Posterior vena cava (tissue), 2 donors: ENCODE measurements at regions of chr10 and their contacts with region 1.

Region 1: DNA sequence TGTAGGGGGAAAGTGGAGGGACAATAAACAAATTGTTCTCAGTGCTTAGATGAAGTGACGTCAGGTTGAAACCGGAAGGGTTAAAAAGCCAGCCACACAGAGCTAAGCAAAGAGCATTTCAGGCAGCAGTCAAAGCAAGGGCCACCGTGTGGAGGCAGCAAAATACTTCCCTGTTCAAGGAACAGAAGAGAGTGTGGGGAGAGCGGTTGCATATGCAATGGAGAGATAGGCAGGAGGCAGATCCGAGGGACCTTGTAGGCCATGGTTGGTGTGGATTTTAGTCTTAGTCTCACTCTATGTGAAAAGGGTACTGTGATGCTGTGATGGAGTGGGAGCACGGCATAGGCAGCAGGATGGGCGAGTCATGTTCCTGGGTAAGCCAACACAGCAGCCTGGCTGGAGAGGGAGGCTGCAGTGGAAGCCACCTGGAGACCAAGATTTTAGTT is 3.8 kb upstream of the STN1 start:
- DNase-seq: no peak

Region 2: DNA sequence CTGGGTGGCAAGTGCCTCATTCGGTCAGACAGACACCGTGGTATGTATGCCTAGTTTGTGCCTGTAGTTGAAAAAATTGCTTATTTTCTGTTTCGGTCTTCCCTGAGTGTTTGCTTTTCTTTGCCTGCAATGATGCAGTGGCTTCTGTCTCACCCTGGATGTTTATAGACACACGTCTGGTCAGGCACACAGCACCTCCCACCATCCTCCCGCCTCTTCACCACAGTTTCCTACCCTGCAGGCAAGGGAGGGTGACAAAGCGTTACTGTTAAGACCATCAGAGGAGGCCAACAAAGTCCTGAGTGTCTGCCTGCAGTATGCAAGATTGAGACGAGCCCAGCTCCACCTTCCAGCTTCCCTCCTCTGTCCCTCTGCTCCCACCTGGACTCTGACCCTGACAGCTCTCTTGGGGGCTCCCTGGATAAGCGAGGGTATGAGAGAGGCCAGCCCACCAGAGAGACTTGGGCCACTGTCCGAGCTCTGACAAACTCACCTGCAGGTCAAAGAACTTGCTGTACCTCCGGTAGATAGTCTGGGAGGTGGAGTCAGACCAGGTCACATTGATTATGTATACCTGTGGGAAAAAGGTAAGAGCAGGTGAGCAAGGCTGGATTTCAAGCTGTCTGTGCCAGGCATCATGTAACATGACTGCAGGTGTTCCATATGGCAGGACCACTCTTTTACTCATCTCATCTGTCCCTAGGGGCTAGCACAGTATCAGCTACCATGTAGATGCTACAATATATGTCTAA is 120.8 kb before region 1 on chr10:
- intact Hi-C with region 1: no loop called
- DNase-seq: no peak

Region 3: DNA sequence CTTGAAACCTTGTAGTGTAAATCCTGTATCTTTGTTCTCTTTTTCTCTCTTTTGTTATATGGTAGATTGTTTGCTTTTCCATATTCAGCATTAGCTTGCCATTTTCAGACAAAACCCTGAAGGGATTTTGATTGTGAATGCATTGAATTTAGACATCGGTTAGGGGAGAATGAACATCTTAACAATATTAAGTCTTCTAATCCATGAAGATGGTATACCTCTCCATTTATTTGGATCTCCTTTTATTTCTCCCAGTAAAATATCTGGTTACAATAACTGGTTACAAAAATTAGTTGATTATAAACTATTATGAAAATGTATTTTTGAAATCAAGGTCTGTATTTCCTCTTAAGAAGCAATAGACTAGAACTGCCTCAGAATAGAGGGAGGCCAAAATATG is 32.8 kb after region 1 on chr10:
- intact Hi-C with region 1: no loop called
- DNase-seq: no peak

Region 4: GRCh38 chr10:103966671-103967447 is 45.1 kb after region 1 on chr10 and contains the start of gene SLK:
- intact Hi-C with region 1: loop called in 1 of 2 experiments (anchors 5 kb)
- DNase-seq: peak; percentile 95
- total RNA-seq, gene SLK: 45.3 to 71.0 TPM